ENCODE measurements at regions of chr4 and their contacts with region 1.

Region 1: GRCh38 chr4:172830295-172830764 is 338.3 kb upstream of the GALNT7 start:
- DNase-seq: peak in 1 of 2 experiments; percentile 14
- H3K4me3 ChIP-seq: no peak overlapping the region
- H3K4me1 ChIP-seq: peaks cover 14% of the 10 kb centered on the region
- H3K27me3 ChIP-seq: no peaks in the 10 kb centered on the region

Region 2: GRCh38 chr4:171857302-171858012 is 972.9 kb before region 1 on chr4:
- in situ Hi-C with region 1: loop called (anchors 25 kb)
- DNase-seq: no peak
- H3K4me3 ChIP-seq: no peak overlapping the region
- H3K4me1 ChIP-seq: peaks cover 10% of the 10 kb centered on the region; the same call in 1 of the 2 replicates
- H3K27me3 ChIP-seq: no peaks in the 10 kb centered on the region

Region 3: DNA sequence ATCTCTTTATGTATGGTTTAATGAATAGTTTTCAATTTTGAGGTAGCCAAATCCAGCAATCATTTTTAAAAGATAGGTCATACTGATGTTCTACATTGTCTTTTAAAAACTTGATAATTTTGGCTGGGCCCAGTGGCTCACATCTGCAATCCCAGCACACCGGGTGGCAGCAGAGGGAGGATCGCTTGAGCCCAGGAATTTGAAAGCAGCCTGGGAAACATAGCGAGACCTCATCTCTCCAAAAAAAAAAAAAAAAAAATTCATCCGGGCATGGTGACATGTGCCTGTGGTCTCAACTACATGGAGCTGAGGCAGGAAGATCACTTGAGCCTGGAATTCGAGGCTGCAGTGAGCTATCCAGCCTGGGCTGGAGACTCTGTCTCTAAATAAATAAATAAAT is 597.4 kb before region 1 on chr4:
- in situ Hi-C with region 1: loop called (anchors 25 kb)
- DNase-seq: peak in 1 of 2 experiments; percentile 16
- H3K4me3 ChIP-seq: no peak overlapping the region
- H3K4me1 ChIP-seq: no peaks in the 10 kb centered on the region
- H3K27me3 ChIP-seq: no peaks in the 10 kb centered on the region

Region 4: GRCh38 chr4:172553216-172553615 is 277.1 kb before region 1 on chr4:
- in situ Hi-C with region 1: no loop called
- DNase-seq: no peak
- H3K4me3 ChIP-seq: no peak overlapping the region
- H3K4me1 ChIP-seq: peaks cover 7% of the 10 kb centered on the region
- H3K27me3 ChIP-seq: no peaks in the 10 kb centered on the region

Region 5: DNA sequence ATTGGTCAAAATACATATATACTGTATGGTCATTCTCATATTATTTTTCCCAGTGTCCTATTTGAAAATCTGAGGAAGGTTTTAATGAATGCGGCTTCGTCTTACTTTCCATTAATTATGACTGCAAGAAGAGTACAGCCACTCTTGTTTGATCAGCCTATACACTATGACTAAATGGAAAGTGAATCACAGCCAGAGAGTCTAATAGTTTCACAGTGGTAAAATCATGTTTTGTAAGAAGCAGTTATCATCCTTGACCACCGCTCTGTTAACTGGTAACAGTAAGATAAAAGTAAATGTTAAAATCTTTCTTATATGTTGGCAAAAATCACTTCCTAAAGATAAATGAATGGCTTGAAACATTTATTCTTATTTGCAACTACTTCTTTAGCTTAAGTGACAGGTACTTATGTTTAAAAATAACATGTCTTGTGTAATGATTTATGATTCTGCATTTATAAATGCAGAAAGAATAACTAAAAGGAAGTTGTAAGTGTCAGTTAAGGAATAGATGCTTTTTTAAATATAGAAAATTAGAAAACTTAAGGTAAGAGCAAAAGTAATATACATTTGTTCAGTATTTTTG is 351.5 kb after region 1 on chr4:
- in situ Hi-C with region 1: no loop called
- DNase-seq: no peak
- H3K4me3 ChIP-seq: no peak overlapping the region
- H3K4me1 ChIP-seq: no peaks in the 10 kb centered on the region
- H3K27me3 ChIP-seq: no peaks in the 10 kb centered on the region

Measured in HAP-1 (cell line).